Ascending aorta (tissue), 2 donors: ENCODE measurements at regions of chr15 and their contacts with region 1.

Region 1: DNA sequence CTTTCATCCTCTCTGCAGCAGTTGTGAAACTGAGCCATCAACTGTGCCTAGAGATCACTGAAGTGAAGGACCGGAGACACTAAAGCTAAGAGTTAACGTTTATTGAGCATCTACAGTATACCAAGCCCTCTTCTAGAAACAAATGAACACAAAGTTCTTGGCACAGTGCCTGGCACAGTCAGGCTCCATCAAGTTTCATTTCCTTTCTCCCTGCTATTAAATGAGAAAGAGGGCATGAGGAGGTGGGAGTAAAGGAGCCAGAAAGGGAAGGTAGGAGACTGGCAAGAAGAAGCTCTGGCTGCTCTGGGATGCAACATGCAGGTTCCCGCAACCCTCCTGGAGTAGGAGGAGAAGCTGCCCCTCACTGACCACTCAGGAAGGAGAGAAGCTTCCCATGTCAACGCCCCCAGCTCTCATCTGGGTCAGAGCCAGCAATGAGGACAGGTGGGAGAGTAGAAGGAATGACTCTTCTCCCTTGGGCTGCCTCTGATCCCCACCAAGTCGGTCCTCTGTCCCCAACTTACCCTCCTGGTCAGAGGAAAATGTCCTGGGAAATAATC is 30.5 kb downstream of the CYP19A1 start:
- DNase-seq: no peak
- H3K4me3 ChIP-seq: no peak overlapping the region
- H3K27ac ChIP-seq: no peak overlapping the region
- H3K4me1 ChIP-seq: no peaks in the 10 kb centered on the region
- H3K27me3 ChIP-seq: no peaks in the 10 kb centered on the region
- CTCF ChIP-seq: no peak

Region 2: GRCh38 chr15:51348688-51349087 is 40.8 kb after region 1 on chr15:
- intact Hi-C with region 1: loop called (anchors 5 kb)
- DNase-seq: no peak
- H3K4me3 ChIP-seq: peak overlapping the region in 1 of 2 donors; percentile 42
- H3K27ac ChIP-seq: peak overlapping the region; percentile 70 to 80
- H3K4me1 ChIP-seq: peaks cover 4 to 25% of the 10 kb centered on the region in 2 donors
- H3K27me3 ChIP-seq: no peaks in the 10 kb centered on the region
- CTCF ChIP-seq: no peak